ENCODE measurements at regions of chr11 and their contacts with region 1.

Region 1: DNA sequence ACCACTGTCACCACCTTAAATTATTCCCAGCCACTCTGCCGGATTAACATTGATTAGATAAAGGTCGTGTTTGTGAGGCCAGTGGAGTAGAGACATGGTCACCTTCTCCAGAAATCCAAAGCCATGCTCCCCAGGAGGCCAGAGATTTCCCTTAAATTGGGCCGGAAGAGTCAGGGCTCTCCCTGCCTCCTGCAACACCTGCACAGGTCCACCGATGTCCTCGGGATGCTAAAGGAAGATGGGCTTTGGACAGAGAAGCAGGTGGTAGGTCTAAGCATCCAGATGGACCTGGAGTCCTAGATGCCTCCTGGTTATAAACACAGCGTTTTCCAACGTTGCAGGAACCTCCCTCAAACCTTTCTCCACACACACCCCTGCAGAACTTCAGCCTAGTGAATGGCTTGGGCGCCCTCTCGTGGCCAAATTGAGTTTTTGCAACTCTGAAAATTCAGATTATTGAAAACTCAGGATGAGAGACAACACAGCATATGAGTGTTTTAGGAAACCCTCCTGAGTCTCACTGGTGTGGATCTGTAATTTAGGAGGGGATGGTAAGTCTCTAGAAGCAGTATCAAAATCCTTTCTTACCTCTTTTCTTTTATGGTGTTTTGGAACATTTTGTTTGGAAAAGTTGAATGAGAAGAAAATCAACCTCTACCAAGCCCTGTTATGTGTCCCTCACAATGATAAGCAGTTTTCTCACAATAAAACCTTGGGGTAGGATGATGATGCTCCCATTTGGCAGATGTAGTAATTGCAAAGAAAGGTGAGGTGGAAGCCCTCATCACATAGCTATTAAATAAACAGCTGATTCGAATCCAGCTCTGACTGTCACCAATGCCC is 109.6 kb downstream of the RRAS2 start:
- DNase-seq: peak; percentile 74
- ATAC-seq: peak; percentile 79
- H3K4me3 ChIP-seq: no peak overlapping the region
- H3K27ac ChIP-seq: no peak overlapping the region
- H3K4me1 ChIP-seq: peaks cover 21% of the 10 kb centered on the region
- H3K27me3 ChIP-seq: peaks cover 5% of the 10 kb centered on the region
- CTCF ChIP-seq: peak; percentile 88

Region 2: GRCh38 chr11:13955971-13956421 is 293.3 kb before region 1 on chr11:
- intact Hi-C with region 1: loop called (anchors 10 kb)
- DNase-seq: no peak
- ATAC-seq: peak; percentile 94
- H3K4me3 ChIP-seq: no peak overlapping the region
- H3K27ac ChIP-seq: no peak overlapping the region
- H3K4me1 ChIP-seq: no peaks in the 10 kb centered on the region
- H3K27me3 ChIP-seq: peaks cover 7% of the 10 kb centered on the region
- CTCF ChIP-seq: peak; percentile 81

Region 3: GRCh38 chr11:14380947-14381561 is 131.7 kb after region 1 on chr11:
- intact Hi-C with region 1: no loop called
- DNase-seq: peak; percentile 90
- ATAC-seq: peak; percentile 95
- H3K4me3 ChIP-seq: peak overlapping the region; percentile 66
- H3K27ac ChIP-seq: peak overlapping the region; percentile 88
- H3K4me1 ChIP-seq: peaks cover 9% of the 10 kb centered on the region
- H3K27me3 ChIP-seq: no peaks in the 10 kb centered on the region
- CTCF ChIP-seq: no peak

Region 4: DNA sequence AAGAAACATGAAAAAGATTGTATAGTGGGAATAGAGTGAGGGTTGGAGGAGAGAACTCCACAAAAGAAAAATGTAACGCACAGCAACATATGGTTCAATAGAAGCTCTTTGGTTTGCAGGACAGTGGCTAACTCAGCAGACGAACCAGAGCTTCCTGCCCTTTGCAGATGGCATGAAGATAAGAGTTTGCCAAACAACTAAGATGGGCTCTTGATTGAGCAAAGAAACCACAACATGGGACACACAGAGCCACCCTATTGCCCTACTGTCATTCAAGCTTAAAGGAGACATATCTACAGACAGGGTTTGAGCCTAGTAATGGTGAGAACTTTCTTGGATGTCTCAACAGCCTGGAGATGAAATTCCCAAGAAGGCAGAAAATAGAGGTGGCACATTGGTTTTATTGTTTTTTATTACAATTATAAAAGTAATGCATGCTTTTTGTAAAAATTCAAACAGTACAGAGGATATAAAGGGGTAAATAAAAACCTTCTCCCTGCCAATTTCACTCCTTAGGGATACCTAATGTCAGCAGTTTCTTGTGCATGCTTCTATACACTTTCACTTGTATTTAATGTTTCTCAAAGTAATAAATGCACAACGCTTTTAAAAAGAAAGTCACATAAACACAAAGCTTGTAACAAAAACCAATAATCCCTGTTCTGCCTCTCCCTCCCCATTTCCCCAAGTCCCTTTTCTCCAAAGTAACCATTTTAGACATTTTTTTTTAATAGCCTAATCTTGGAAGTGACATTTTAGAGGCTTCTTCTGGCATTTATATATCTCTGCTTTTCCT is 186.6 kb after region 1 on chr11:
- intact Hi-C with region 1: no loop called
- DNase-seq: no peak
- ATAC-seq: no peak
- H3K4me3 ChIP-seq: no peak overlapping the region
- H3K27ac ChIP-seq: no peak overlapping the region
- H3K4me1 ChIP-seq: no peaks in the 10 kb centered on the region
- H3K27me3 ChIP-seq: no peaks in the 10 kb centered on the region
- CTCF ChIP-seq: no peak

Measured in upper lobe of right lung (tissue), 1 donor.